Activated CD8-positive, alpha-beta T cell treated with anti-CD3 and anti-CD28 coated beads, Interleukin-2, amount 10 ng/mL, durations not matched to agents 7 days and 5 days (primary cell): ENCODE measurements at regions of chr20 and their contacts with region 1.

Region 1: GRCh38 chr20:38926142-38926933 is at the start of gene FAM83D:
- DNase-seq: peak; percentile 98
- ATAC-seq: peak; percentile 95
- H3K4me3 Mint-ChIP-seq: peak within 1 kb of the TSS; percentile 91
- H3K27ac Mint-ChIP-seq: peak within 1 kb of the TSS; percentile 84
- H3K4me1 Mint-ChIP-seq: peaks cover 38% of the 10 kb centered on the region
- H3K27me3 Mint-ChIP-seq: no peaks in the 10 kb centered on the region
- total RNA-seq, gene FAM83D: 24.9 to 25.6 TPM

Region 2: GRCh38 chr20:38941726-38942389 is 15.5 kb after region 1 on chr20:
- CTCF ChIA-PET with region 1: interaction called, 12 read pairs
- POLR2A ChIA-PET with region 1: no interaction called
- DNase-seq: no peak
- ATAC-seq: no peak
- H3K4me3 Mint-ChIP-seq: no peak overlapping the region
- H3K27ac Mint-ChIP-seq: peak overlapping the region; percentile 6
- H3K4me1 Mint-ChIP-seq: peaks cover 4% of the 10 kb centered on the region
- H3K27me3 Mint-ChIP-seq: no peaks in the 10 kb centered on the region